Testis (tissue), 5 donors: ENCODE measurements at regions of chr22 and their contacts with region 1.

Region 1: GRCh38 chr22:39003165-39003638 is 10.9 kb upstream of the APOBEC3C start:
- DNase-seq: peak; percentile 84
- H3K4me3 ChIP-seq: no peak overlapping the region
- H3K27ac ChIP-seq: no peak overlapping the region
- H3K4me1 ChIP-seq: peaks cover 7% of the 10 kb centered on the region
- H3K27me3 ChIP-seq: no peaks in the 10 kb centered on the region
- CTCF ChIP-seq: peak; percentile 55 to 69 (median 68)
- POLR2A ChIP-seq: no peak

Region 2: GRCh38 chr22:38872172-38872830 is 130.9 kb before region 1 on chr22 and contains the start of gene CBX6:
- intact Hi-C with region 1: loop called (anchors 10 kb)
- DNase-seq: peak; percentile 96
- H3K4me3 ChIP-seq: peak within 1 kb of the TSS; percentile 87 to 91
- H3K27ac ChIP-seq: peak within 1 kb of the TSS; percentile 93 to 96
- H3K4me1 ChIP-seq: peaks cover 24% of the 10 kb centered on the region
- H3K27me3 ChIP-seq: no peaks in the 10 kb centered on the region
- CTCF ChIP-seq: peak in 1 of 3 experiments; percentile 38
- POLR2A ChIP-seq: no peak
- total RNA-seq, gene CBX6: 30.1 to 33.1 TPM

Region 3: GRCh38 chr22:39110631-39111561 is 107.7 kb after region 1 on chr22:
- intact Hi-C with region 1: no loop called
- DNase-seq: no peak
- H3K4me3 ChIP-seq: no peak overlapping the region
- H3K27ac ChIP-seq: no peak overlapping the region
- H3K4me1 ChIP-seq: no peaks in the 10 kb centered on the region
- H3K27me3 ChIP-seq: no peaks in the 10 kb centered on the region
- CTCF ChIP-seq: no peak
- POLR2A ChIP-seq: no peak

Region 4: GRCh38 chr22:39123751-39124601 is 120.8 kb after region 1 on chr22:
- intact Hi-C with region 1: loop called (anchors 10 kb)
- DNase-seq: no peak
- H3K4me3 ChIP-seq: no peak overlapping the region
- H3K27ac ChIP-seq: no peak overlapping the region
- H3K4me1 ChIP-seq: no peaks in the 10 kb centered on the region
- H3K27me3 ChIP-seq: no peaks in the 10 kb centered on the region
- CTCF ChIP-seq: no peak
- POLR2A ChIP-seq: no peak